GM13976 (cell line): ENCODE measurements at regions of chr20 and their contacts with region 1.

Region 1: GRCh38 chr20:53939572-53940359 is 130.6 kb downstream of the BCAS1 start:
- DNase-seq: peak; percentile 68
- CTCF ChIP-seq: peak; percentile 81

Region 2: GRCh38 chr20:53594068-53595017 is 345.4 kb before region 1 on chr20:
- in situ Hi-C with region 1: loop called (anchors 25 kb)
- DNase-seq: peak; percentile 88
- CTCF ChIP-seq: peak; percentile 54